GM18951 (cell line): ENCODE measurements at regions of chr3 and their contacts with region 1.

Region 1: GRCh38 chr3:97658668-97659285 is 105.8 kb upstream of the ARL6 start:
- POLR2A ChIP-seq: no peak

Region 2: DNA sequence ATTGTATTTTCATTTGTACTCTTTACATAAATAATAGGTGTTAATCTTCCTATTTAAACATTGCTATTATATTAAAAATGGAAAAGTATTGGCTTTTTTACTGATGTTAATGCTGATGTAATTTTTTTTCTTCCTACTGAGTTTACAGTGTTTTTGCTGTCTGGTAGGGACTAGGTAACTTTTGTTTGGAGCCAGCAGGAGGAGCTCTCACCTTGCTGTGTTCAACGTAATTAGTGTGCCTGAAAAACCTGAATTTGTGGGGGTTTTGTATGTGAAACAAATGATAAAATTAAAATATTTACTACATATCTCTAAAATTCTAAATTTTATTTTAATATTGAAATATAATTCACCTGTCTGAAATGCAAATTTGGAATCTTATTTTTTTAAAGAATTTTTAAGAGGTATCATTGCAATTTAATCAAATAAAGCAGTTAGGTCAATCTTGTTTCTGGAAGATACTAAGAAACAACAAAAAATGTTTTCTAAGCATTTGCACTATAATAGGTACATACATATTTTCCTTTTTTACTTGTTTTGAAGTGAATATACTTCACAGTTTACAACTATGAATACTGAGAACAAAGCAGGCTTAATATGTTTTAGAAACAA is 795.5 kb before region 1 on chr3:
- in situ Hi-C with region 1: loop called (anchors 25 kb)
- POLR2A ChIP-seq: no peak